ENCODE measurements at regions of chr17 and their contacts with region 1.

Region 1: DNA sequence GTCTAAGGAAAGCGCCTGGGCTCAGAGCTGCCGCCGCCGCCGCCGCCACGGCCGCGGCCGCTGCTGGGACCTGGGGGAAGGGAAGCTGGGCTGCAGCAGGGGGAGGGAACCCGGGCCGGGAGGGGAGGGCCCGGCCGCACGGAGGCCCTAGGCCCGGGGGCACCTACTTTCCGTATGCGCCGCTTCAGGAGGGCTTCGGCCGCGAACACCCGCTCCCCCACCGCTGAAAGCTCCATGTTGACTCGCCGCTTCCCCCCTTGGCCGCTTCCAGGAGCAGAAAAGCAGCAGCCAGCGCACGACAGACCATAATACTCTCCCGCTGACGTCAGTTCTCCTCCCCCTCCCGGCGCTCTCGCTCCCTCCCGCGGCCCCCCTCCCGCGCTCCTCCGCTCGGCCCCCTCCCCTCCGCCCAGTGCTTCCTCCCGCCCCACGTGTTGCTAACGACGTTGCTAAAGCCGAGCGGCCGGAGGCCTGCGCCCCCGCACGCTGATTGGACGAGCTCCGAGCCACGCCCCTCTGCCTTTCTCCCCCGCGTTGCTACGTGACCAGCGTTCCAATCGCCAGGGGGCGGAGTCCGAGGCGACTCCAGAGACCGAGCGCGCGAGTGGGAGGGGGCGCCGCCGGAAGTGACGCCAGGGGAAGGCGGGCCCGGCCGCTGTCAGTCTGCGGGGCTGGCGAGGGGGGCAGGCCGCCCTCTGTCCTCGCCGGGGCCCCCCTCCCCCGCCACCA is at the start of gene CBX8:
- DNase-seq: peak; percentile 97
- H3K4me3 ChIP-seq: peak within 1 kb of the TSS; percentile 32 to 71
- H3K4me3 Mint-ChIP-seq: peak within 1 kb of the TSS; percentile 86 to 95 (median 88)
- H3K27ac ChIP-seq: peak within 1 kb of the TSS; percentile 18
- H3K27ac Mint-ChIP-seq: peak within 1 kb of the TSS; percentile 86 to 94 (median 92)
- H3K4me1 ChIP-seq: peaks cover 52% of the 10 kb centered on the region
- H3K4me1 Mint-ChIP-seq: peaks cover 21 to 54% (median 31%) of the 10 kb centered on the region in 4 donors
- H3K27me3 ChIP-seq: peaks cover 42% of the 10 kb centered on the region
- H3K27me3 Mint-ChIP-seq: peaks cover 30 to 38% of the 10 kb centered on the region in 2 donors
- total RNA-seq, gene CBX8: 2.8 to 4.1 TPM

Region 2: GRCh38 chr17:79777894-79778503 is 18.9 kb before region 1 on chr17 and contains the start of gene CBX2:
- CTCF ChIA-PET with region 1: no interaction called
- POLR2A ChIA-PET with region 1: interaction called, 19 read pairs
- intact Hi-C with region 1: loop called (anchors 2 kb)
- DNase-seq: peak; percentile 65 to 79 (median 75)
- H3K4me3 ChIP-seq: peak within 1 kb of the TSS in 1 of 2 donors; percentile 43
- H3K4me3 Mint-ChIP-seq: peak within 1 kb of the TSS; percentile 79 to 85 (median 80)
- H3K27ac ChIP-seq: no peak within 1 kb of the TSS
- H3K27ac Mint-ChIP-seq: peak within 1 kb of the TSS in 6 of 7 donors; percentile 15 to 82 (median 57)
- H3K4me1 ChIP-seq: peaks cover 20% of the 10 kb centered on the region
- H3K4me1 Mint-ChIP-seq: peaks cover 2 to 12% (median 10%) of the 10 kb centered on the region in 4 donors
- H3K27me3 ChIP-seq: peaks cover 20% of the 10 kb centered on the region
- H3K27me3 Mint-ChIP-seq: peaks cover 47 to 60% of the 10 kb centered on the region in 2 donors
- total RNA-seq, gene CBX2: 0.06 to 0.44 TPM

Region 3: DNA sequence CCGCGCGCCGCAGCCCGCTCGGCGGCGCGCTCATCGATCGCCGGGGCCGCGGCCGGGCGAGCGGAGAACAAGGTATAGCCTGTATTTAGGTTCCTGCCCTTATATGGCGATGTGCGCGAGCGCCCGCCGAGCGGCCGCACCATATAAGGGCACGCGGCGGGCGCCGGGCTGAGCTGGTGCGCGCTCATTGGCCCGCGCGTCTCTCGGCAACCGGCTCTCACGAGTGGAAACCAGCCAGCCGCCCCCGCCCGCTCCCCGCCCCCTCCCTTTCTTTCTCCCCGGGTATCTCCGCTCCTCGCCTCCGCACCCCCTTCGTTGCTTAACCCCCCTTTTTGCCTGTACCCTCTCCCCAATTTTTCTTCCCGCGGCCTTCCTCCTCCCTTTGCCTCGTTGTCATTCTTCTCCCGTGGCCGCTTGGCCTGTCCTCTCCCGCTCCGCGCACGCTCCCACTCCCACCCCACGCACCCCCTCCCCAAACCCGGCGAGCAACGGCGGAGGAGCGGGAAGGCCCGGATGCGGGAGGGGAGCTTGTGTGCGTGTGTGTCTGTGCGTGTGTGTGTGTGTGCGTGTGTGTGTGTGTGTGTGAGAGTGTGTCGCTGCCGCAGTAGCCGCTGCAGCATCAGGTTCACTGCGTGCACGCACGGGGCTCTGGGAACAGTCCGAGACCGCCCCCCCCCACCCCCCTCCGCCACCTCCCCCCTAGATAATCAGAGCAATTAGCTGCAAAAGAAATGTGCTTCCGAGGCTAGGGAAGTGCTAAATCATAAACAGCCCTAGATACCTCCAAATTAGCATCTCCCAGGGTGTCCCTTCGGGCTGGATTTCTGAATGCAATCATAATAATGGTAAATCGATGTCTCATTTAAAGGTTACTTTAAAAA is 13.4 kb after region 1 on chr17:
- CTCF ChIA-PET with region 1: interaction called, 3 read pairs
- POLR2A ChIA-PET with region 1: interaction called, 79 read pairs
- intact Hi-C with region 1: loop called (anchors 1 kb)
- DNase-seq: peak; percentile 68 to 84 (median 75)
- H3K4me3 ChIP-seq: peak overlapping the region in 1 of 2 donors; percentile 35
- H3K4me3 Mint-ChIP-seq: peak overlapping the region in 6 of 8 donors; percentile 27 to 77 (median 51)
- H3K27ac ChIP-seq: no peak overlapping the region
- H3K27ac Mint-ChIP-seq: peak overlapping the region in 4 of 7 donors; percentile 51 to 88 (median 78)
- H3K4me1 ChIP-seq: peaks cover 47% of the 10 kb centered on the region
- H3K4me1 Mint-ChIP-seq: peaks cover 14 to 44% (median 25%) of the 10 kb centered on the region in 4 donors
- H3K27me3 ChIP-seq: peaks cover 69% of the 10 kb centered on the region
- H3K27me3 Mint-ChIP-seq: peaks cover 50 to 56% of the 10 kb centered on the region in 2 donors

Region 4: DNA sequence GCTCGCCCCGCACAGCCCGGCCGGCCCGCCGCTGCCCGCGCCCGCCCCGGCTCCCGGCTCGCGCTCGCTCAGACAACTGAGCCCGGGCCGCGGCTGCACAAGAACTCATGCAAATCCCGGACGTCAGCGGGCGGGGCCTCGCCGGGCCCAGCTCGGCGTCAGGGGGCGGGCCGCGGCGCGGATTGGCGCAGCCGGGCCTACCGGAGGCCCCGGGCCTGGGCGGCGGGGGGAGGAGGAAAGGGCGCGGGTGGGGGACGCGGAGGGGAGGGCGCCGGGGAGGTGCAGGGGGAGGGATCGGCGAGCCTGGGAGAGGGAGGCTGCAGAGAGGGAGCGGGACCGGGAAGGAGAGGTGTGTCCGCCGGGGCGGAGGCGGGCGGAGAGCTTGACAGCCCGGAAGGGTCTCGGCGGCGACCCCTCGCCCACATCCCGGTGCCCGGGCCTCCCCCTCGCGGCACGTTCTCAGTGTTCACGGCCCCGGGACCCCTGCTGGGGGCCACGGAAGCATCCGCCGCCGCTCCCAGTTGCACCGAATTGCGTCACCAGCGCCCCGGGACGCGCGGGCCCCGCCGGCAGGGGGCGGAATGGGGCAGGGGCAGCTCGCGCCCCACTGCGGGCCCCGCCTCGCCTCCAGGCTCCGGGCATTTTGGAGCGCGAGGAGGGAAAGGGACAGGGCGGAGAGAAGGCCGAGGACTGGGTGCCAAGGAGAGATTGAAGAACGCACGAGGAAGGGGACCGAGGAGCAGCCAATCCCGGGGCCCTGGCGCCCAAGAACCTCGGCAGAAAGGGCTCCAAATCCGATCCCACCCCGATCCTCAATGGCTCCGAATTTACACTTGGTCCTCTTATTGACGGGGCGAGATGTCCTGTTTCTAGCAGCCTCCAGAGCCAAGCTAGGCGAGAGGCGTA is 42.7 kb after region 1 on chr17 and contains the start of gene CBX4:
- CTCF ChIA-PET with region 1: interaction called, 10 read pairs
- POLR2A ChIA-PET with region 1: interaction called, 503 read pairs
- intact Hi-C with region 1: loop called (anchors 1 kb)
- DNase-seq: peak; percentile 85 to 92 (median 87)
- H3K4me3 ChIP-seq: peak within 1 kb of the TSS; percentile 89 to 99
- H3K4me3 Mint-ChIP-seq: peak within 1 kb of the TSS; percentile 91 to 97 (median 96)
- H3K27ac ChIP-seq: peak within 1 kb of the TSS; percentile 52
- H3K27ac Mint-ChIP-seq: peak within 1 kb of the TSS; percentile 89 to 98 (median 95)
- H3K4me1 ChIP-seq: peaks cover 75% of the 10 kb centered on the region
- H3K4me1 Mint-ChIP-seq: peaks cover 12 to 65% (median 40%) of the 10 kb centered on the region in 4 donors
- H3K27me3 ChIP-seq: peaks cover 37% of the 10 kb centered on the region
- H3K27me3 Mint-ChIP-seq: peaks cover 10 to 13% of the 10 kb centered on the region in 2 donors
- total RNA-seq, gene CBX4: 64.7 to 65.7 TPM

Region 5: GRCh38 chr17:79997011-79997660 is 200.2 kb after region 1 on chr17:
- CTCF ChIA-PET with region 1: interaction called, 5 read pairs
- POLR2A ChIA-PET with region 1: interaction called, 13 read pairs
- intact Hi-C with region 1: loop called (anchors 2 kb)
- DNase-seq: peak; percentile 89 to 98 (median 94)
- H3K4me3 ChIP-seq: peak overlapping the region; percentile 39 to 54
- H3K4me3 Mint-ChIP-seq: peak overlapping the region; percentile 79 to 91 (median 82)
- H3K27ac ChIP-seq: peak overlapping the region; percentile 64
- H3K27ac Mint-ChIP-seq: peak overlapping the region; percentile 88 to 98 (median 96)
- H3K4me1 ChIP-seq: peaks cover 51% of the 10 kb centered on the region
- H3K4me1 Mint-ChIP-seq: peaks cover 31 to 52% (median 40%) of the 10 kb centered on the region in 4 donors
- H3K27me3 ChIP-seq: no peaks in the 10 kb centered on the region
- H3K27me3 Mint-ChIP-seq: no peaks in the 10 kb centered on the region

Measured in CD4-positive, alpha-beta memory T cell (primary cell).